ENCODE measurements at regions of chr1 and their contacts with region 1.

Region 1: DNA sequence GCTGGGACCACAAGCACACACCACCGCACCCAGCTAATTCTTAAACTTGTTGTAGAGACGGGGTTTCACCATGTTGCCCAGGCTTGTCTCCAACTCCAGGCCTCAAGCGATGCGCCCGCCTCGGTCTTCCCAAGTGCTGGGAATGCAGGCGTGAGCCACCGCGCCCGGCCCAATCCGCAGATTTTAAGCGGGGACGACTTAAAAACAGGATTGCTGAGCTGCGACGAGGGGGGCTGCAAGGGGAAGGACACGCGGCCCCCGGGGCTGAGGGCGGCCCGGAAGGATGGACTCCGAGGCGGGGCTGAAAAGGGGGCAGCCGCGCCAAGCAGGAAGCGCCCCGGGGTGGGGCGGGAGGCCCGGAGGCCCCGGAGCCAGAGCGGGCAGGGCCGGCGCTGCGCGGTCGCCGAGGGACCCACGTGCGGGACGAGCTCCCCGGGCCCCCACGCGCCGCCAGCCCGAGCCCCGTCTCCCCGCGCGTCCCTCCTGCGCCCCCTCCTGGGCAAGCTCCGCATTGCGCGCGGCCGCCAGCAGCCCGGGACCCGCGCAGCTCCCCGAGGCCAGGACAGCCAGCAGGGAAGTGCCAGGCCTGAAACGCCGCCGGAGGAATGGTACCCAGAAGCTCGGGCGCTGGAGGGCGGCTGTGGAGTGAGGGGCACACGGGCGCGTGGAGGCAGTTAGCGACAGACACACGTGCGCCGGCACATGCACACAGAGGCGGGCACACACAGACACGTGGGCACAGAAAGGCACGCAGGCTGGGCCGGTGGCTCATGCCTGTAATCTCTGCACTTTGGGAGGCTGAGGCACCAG is 5.5 kb upstream of the PRKCZ start:
- DNase-seq: peak; percentile 83
- H3K4me3 Mint-ChIP-seq: no peak overlapping the region
- H3K27ac Mint-ChIP-seq: no peak overlapping the region
- H3K4me1 Mint-ChIP-seq: peaks cover 12% of the 10 kb centered on the region
- H3K27me3 Mint-ChIP-seq: peaks cover 14% of the 10 kb centered on the region

Region 2: DNA sequence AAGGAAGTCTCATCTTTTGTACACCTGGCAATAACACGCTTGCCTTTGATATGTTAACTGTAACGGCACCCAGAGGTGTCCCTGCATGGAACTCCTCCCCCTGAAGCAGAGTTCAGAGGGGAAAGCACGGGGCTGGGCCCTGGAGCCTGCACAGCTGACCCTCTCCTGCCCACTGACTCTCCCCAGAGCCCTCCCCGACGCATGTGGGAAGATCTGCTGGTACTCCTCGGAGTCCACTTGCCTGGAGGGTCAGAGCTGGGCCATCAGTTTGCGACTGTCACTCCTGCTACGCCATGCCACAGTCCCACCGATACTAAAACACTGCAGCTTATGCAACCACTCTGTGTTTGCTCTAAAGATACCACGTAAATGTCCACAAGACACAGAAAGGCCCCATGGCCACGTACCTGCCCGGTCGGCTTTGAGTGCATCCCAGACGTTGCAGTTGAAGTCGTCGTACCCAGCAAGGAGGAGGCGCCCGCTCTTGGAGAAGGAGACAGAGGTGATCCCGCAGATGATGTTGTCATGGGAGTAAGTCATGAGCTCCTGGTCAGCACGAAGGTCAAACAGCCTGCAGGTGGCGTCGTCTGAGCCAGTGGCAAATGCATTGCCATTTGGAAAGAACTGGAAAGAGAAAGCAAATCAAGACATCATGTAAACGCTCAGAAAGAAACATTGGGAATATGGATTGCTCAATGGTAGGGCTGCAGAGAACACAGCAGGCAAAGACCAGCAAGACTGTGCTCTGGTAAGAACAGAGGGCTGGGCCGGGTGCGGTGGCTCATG is 255.9 kb before region 1 on chr1:
- CTCF ChIA-PET with region 1: no interaction called
- POLR2A ChIA-PET with region 1: no interaction called
- intact Hi-C with region 1: no loop called
- DNase-seq: peak; percentile 42
- H3K4me3 Mint-ChIP-seq: no peak overlapping the region
- H3K27ac Mint-ChIP-seq: no peak overlapping the region
- H3K4me1 Mint-ChIP-seq: peaks cover 2% of the 10 kb centered on the region
- H3K27me3 Mint-ChIP-seq: no peaks in the 10 kb centered on the region

Region 3: GRCh38 chr1:1943834-1944570 is 100.7 kb before region 1 on chr1:
- CTCF ChIA-PET with region 1: interaction called, 67 read pairs
- POLR2A ChIA-PET with region 1: no interaction called
- intact Hi-C with region 1: loop called (anchors 5 kb)
- DNase-seq: peak; percentile 57
- H3K4me3 Mint-ChIP-seq: no peak overlapping the region
- H3K27ac Mint-ChIP-seq: no peak overlapping the region
- H3K4me1 Mint-ChIP-seq: peaks cover 3% of the 10 kb centered on the region
- H3K27me3 Mint-ChIP-seq: peaks cover 2% of the 10 kb centered on the region

Region 4: DNA sequence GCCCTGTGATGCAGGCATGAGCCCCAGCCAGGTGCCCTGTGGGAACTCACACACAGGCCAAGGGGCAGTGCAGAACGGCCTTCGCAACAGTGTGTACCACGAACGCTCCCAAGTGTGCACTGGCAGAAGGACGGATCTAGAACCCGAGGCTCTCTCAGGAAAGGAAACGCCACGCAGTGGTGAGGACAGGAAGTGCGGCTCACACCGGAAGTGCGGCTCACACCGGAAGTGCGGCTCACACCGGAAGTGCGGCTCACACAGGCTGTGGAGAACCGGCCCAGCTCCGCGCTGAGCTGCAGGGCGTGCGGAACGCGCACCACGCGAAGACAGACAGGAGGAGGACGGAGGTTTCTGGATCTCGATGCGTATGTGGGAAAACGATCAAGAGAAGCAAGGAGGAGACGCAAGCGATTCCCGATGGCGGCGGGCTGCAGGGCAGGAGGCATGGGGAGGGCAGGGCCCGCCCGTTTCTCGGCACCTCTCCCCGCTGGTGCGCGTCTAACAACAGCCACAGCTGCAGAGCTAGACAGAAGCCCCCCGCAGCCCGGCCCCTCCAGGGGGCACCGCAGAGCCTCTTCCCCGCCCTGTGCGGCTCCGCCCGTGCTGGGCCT is 89.8 kb before region 1 on chr1:
- CTCF ChIA-PET with region 1: interaction called, 59 read pairs
- POLR2A ChIA-PET with region 1: no interaction called
- intact Hi-C with region 1: loop called (anchors 2 kb)
- DNase-seq: peak; percentile 46
- H3K4me3 Mint-ChIP-seq: no peak overlapping the region
- H3K27ac Mint-ChIP-seq: peak overlapping the region; percentile 33
- H3K4me1 Mint-ChIP-seq: peaks cover 5% of the 10 kb centered on the region
- H3K27me3 Mint-ChIP-seq: peaks cover 19% of the 10 kb centered on the region

Region 5: DNA sequence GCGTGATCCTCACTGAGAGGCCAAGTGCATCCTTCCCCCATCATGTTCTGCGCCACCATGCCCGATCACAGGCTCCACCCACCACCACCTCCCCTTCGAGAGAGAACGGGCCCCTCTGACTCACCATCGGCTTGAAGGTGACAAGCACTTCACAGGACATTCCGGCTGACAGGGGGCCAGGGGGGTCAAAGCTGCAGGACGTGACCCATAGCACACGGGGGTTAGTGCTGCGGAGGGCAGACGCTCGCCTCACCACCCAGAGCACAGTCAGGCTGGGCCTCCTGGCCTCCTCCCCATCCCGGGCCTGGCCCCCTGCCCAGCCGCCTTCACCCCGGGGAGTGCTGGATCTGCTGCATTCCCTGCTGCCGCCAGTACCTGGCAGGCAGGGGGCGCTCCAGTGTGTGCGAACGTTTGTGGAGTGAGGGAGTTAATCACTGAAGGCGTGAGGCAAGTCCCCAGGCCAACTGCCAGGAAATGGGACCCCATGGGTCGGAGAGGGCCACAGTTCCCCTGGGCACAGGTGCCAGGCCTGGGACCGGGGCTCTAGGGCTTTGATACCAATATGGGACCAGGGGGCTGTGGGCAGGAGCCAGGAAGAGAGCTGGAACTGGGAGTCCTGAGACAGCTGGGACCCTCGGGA is 84.8 kb before region 1 on chr1:
- CTCF ChIA-PET with region 1: interaction called, 59 read pairs
- POLR2A ChIA-PET with region 1: no interaction called
- intact Hi-C with region 1: loop called (anchors 2 kb)
- DNase-seq: peak; percentile 85
- H3K4me3 Mint-ChIP-seq: no peak overlapping the region
- H3K27ac Mint-ChIP-seq: no peak overlapping the region
- H3K4me1 Mint-ChIP-seq: peaks cover 4% of the 10 kb centered on the region
- H3K27me3 Mint-ChIP-seq: peaks cover 25% of the 10 kb centered on the region

Region 6: DNA sequence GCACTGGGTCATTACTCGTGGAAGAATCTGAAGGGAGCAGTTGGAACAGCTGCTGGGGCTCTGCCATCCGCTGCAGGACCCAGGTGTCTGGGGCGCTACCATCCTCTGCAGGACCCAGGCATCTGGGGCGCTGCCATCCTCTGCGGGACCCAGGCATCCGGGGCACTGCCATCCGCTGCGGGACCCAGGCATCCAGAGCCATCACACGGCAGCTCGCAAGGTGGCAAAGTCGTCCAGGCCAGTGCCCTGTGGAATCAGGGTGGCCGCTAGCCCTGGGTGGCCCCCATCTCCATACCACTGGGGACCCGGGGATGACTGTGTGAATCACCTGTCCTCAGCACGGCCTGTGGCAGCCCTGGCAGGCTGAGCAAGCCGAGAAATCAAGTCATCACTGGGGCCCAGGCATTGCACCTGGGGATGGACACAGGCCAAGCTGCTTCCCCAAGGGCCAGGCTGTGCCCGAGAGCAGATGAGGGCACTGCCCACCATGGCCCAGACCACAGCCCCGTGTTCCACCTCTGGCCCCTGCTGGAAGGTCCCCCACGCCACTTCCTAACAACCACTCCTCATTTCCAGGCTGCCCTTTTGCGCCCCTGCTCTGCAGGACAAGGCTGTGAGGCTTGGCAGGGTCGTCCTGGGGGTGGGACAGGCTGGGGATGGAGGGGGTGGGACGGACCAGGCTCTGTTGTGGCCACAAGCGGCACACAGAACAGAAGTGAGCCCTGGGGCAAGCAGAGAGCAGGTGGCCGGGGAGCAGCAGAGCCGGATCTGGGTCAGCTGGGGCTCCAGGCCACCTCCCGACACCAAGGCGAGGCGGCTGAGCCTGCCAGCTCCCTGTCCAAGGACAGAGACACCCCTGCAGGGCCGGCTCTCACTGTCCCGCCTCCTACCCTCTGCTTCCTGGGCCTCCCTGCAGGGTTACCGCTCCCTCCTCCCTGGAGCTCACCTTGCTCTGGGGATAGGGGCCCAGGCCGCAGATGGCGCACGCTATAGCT is 12.9 kb before region 1 on chr1:
- CTCF ChIA-PET with region 1: interaction called, 10 read pairs
- POLR2A ChIA-PET with region 1: no interaction called
- intact Hi-C with region 1: no loop called
- DNase-seq: no peak
- H3K4me3 Mint-ChIP-seq: no peak overlapping the region
- H3K27ac Mint-ChIP-seq: no peak overlapping the region
- H3K4me1 Mint-ChIP-seq: no peaks in the 10 kb centered on the region
- H3K27me3 Mint-ChIP-seq: peaks cover 1% of the 10 kb centered on the region

Region 7: DNA sequence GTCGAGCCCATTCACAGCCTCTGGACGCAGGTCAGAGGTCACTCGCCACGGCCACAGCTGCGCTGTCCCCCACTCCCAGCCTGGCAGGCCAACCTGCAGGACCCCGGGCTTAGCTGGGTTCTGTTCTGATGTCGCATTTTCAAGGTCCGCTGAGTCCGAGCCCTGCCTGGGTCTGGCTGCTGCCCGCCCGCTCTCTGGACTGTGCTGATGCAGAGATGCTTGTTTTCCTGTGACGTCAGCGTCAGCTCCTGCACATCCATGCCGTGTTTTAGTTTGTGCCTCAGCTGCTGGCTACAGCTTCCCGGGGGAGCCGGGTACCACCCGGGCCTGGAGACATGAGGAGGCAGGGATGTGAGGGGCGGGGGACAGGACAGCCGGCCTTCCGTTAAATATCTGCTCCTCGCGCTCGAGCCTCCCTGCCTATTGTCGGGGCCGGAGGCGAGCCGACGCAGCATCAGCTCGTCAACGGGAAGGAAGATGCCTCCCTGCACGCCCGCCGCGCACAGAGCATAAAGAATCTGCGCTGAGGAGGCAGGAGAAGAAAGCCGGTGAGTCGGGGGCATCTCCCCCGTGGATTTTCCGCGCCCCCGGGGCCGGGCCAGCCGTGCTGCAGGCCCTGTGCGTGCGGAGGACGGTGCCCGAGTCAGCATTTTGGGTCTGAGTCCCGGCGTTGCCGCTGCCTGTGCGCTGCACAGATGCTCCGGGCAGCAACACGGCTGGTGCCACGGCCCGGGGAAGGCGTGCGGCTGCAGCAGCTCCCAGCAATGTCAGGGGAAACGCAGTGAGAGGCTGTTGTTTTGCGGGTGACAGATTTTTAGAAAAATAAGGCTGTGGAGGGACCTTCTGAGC is 28.9 kb after region 1 on chr1:
- CTCF ChIA-PET with region 1: interaction called, 14 read pairs
- POLR2A ChIA-PET with region 1: no interaction called
- intact Hi-C with region 1: no loop called
- DNase-seq: no peak
- H3K4me3 Mint-ChIP-seq: no peak overlapping the region
- H3K27ac Mint-ChIP-seq: no peak overlapping the region
- H3K4me1 Mint-ChIP-seq: peaks cover 9% of the 10 kb centered on the region
- H3K27me3 Mint-ChIP-seq: no peaks in the 10 kb centered on the region

Region 8: DNA sequence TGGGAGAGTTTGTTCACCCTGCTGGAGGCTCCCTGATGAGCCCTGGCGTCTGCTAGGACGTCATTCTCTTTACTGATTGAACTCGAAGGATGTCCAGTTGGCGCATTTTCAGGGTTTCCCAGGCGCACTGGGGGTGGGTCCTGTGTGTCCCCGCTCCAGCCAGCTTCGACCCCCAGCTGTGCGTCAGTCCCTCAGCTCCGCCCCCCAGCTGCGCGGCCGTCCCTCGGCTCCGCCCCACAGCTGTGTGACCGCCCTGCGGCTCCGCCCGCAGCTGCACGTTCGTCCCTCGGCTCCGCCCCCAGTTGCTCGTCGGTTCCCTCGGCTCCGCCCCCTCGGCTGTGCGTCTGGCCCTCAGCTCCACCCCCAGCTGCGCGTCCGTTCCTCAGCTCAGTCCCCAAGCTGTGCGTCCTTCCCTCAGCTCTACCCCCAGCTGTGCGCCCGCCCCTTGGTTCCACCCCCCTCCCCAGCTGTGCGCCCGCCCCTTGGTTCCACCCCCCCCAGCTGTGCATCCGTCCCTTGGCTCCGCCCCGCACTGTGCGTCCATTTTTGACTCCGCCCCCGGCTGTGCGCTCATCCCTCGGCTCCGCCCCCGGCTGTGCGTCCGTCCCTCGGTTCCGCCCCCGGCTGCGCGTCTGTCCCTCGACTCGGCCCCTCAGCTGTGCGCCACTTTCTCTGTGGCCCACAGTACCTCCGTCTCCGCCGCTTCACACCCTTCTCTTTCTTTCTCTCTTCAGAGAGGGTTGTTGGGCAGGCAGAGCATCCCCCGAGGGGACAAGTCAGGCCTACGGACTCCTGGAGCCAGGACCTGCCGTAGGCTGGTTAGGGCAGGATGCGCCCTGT is 88.5 kb after region 1 on chr1:
- CTCF ChIA-PET with region 1: interaction called, 11 read pairs
- POLR2A ChIA-PET with region 1: no interaction called
- intact Hi-C with region 1: no loop called
- DNase-seq: peak; percentile 98
- H3K4me3 Mint-ChIP-seq: peak overlapping the region; percentile 77
- H3K27ac Mint-ChIP-seq: peak overlapping the region; percentile 49
- H3K4me1 Mint-ChIP-seq: peaks cover 19% of the 10 kb centered on the region
- H3K27me3 Mint-ChIP-seq: no peaks in the 10 kb centered on the region